ENCODE measurements at regions of chr12 and their contacts with region 1.

Region 1: GRCh38 chr12:119659289-119659897 is 8.5 kb upstream of the PRKAB1 start:
- DNase-seq: peak; percentile 58
- H3K4me3 Mint-ChIP-seq: no peak overlapping the region
- H3K27ac Mint-ChIP-seq: no peak overlapping the region
- H3K4me1 Mint-ChIP-seq: no peaks in the 10 kb centered on the region
- H3K27me3 Mint-ChIP-seq: peaks cover 13% of the 10 kb centered on the region
- CTCF ChIP-seq: peak; percentile 66

Region 2: GRCh38 chr12:119780786-119781434 is 121.5 kb after region 1 on chr12:
- CTCF ChIA-PET with region 1: interaction called, 20 read pairs
- intact Hi-C with region 1: loop called (anchors 1 kb)
- DNase-seq: peak; percentile 71
- H3K4me3 Mint-ChIP-seq: peak overlapping the region; percentile 26
- H3K27ac Mint-ChIP-seq: peak overlapping the region; percentile 15
- H3K4me1 Mint-ChIP-seq: peaks cover 14% of the 10 kb centered on the region
- H3K27me3 Mint-ChIP-seq: no peaks in the 10 kb centered on the region
- CTCF ChIP-seq: peak; percentile 70

Region 3: GRCh38 chr12:119902084-119902509 is 242.7 kb after region 1 on chr12:
- CTCF ChIA-PET with region 1: interaction called, 3 read pairs
- intact Hi-C with region 1: loop called (anchors 5 kb)
- DNase-seq: peak; percentile 81
- H3K4me3 Mint-ChIP-seq: no peak overlapping the region
- H3K27ac Mint-ChIP-seq: no peak overlapping the region
- H3K4me1 Mint-ChIP-seq: peaks cover 8% of the 10 kb centered on the region
- H3K27me3 Mint-ChIP-seq: peaks cover 19% of the 10 kb centered on the region
- CTCF ChIP-seq: peak; percentile 77